ENCODE measurements at regions of chr18 and their contacts with region 1.

Region 1: DNA sequence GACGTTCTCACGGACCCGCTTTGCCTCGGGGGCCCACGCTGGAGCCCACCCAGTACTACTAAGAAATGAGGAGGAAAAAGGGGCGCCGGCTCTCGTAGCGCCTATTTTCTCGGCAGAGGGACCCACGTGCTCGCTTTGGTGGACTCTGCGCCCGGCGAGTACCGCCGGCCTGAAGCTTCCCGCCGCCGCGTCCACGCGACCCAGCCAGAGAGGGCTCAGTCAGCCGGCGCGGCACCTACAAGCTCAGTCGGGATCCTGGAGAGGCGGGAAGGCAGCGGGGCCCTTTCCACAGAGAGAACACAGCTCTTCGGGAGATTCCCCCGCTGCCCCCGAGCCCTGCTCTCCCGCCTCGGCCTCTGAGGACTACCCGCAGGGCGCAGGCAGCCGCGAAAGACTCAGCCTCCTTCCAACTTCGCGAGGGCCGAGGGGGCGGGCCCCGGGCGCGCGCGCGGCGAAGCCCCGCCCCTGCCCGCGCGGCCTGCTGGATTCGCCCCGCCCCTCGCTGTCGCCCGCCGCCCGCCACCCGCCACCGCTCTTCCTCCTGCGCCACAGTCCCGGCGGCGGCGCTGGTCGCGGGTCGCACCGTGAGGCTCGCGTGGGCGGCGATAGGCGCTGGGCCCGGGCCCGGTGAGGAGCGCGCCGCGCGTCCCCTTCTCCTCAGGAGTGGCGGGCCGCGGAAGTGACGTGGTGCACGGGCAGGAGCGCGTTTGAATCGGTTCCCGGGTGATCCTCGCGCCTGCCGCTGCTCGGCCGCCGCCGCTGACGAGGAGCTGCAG is at the start of gene SMCHD1:
- DNase-seq: peak; percentile 83 to 95 (median 90)
- ATAC-seq: peak; percentile 88
- H3K4me3 ChIP-seq: peak within 1 kb of the TSS; percentile 97
- H3K4me3 Mint-ChIP-seq: peak within 1 kb of the TSS; percentile 91 to 99 (median 95)
- H3K27ac ChIP-seq: peak within 1 kb of the TSS; percentile 100
- H3K27ac Mint-ChIP-seq: peak within 1 kb of the TSS; percentile 91 to 99 (median 96)
- H3K4me1 ChIP-seq: peaks cover 23 to 38% of the 10 kb centered on the region in 2 donors
- H3K4me1 Mint-ChIP-seq: peaks cover 23 to 66% (median 50%) of the 10 kb centered on the region in 7 donors
- H3K27me3 ChIP-seq: no peaks in the 10 kb centered on the region
- H3K27me3 Mint-ChIP-seq: no peaks in the 10 kb centered on the region
- total RNA-seq, gene SMCHD1: 181 to 305 (median 236) TPM

Region 2: GRCh38 chr18:2571200-2572143 is 83.9 kb before region 1 on chr18 and contains the starts of genes METTL4 and NDC80:
- CTCF ChIA-PET with region 1: interaction called, 4 read pairs
- POLR2A ChIA-PET with region 1: interaction called, 119 read pairs
- intact Hi-C with region 1: loop called (anchors 1 kb)
- DNase-seq: peak; percentile 70 to 90 (median 82)
- ATAC-seq: peak; percentile 87
- H3K4me3 ChIP-seq: peak within 1 kb of the TSS; percentile 88
- H3K4me3 Mint-ChIP-seq: peak within 1 kb of the TSS; percentile 96 to 100 (median 99)
- H3K27ac ChIP-seq: peak within 1 kb of the TSS; percentile 97
- H3K27ac Mint-ChIP-seq: peak within 1 kb of the TSS; percentile 98 to 100 (median 100)
- H3K4me1 ChIP-seq: peaks cover 10 to 13% of the 10 kb centered on the region in 2 donors
- H3K4me1 Mint-ChIP-seq: peaks cover 38 to 63% (median 59%) of the 10 kb centered on the region in 7 donors
- H3K27me3 ChIP-seq: no peaks in the 10 kb centered on the region
- H3K27me3 Mint-ChIP-seq: no peaks in the 10 kb centered on the region
- total RNA-seq, gene METTL4: 13.8 to 32.5 (median 22.8) TPM
- total RNA-seq, gene NDC80: 2.4 to 53.6 (median 2.7) TPM

Region 3: DNA sequence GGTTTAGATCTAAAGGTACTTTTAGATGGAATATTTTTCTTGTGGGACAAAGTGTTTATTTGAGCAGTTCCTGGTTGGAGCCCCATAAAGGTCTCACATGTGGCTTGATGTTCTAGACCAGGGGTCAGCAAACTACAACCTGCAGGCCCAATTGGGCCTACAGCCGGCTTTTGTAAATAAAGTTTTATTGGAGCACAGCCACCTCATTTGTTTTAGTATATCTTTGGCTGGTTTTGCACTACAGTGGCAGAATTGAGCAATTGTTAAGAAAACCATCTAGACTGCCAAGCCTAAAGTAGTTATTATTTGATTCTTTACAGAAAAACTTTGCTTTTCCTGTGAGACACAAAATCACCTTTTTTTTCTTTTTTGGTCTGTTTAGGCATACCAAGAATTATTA is 42.4 kb before region 1 on chr18:
- CTCF ChIA-PET with region 1: interaction called, 7 read pairs
- POLR2A ChIA-PET with region 1: interaction called, 19 read pairs
- intact Hi-C with region 1: no loop called
- DNase-seq: no peak
- ATAC-seq: no peak
- H3K4me3 ChIP-seq: no peak overlapping the region
- H3K4me3 Mint-ChIP-seq: no peak overlapping the region
- H3K27ac ChIP-seq: no peak overlapping the region
- H3K27ac Mint-ChIP-seq: peak overlapping the region in 2 of 9 donors; percentile 11 to 65
- H3K4me1 ChIP-seq: peaks cover 0 to 6% of the 10 kb centered on the region in 2 donors
- H3K4me1 Mint-ChIP-seq: peaks cover 5 to 42% (median 32%) of the 10 kb centered on the region in 7 donors
- H3K27me3 ChIP-seq: no peaks in the 10 kb centered on the region
- H3K27me3 Mint-ChIP-seq: no peaks in the 10 kb centered on the region

Region 4: DNA sequence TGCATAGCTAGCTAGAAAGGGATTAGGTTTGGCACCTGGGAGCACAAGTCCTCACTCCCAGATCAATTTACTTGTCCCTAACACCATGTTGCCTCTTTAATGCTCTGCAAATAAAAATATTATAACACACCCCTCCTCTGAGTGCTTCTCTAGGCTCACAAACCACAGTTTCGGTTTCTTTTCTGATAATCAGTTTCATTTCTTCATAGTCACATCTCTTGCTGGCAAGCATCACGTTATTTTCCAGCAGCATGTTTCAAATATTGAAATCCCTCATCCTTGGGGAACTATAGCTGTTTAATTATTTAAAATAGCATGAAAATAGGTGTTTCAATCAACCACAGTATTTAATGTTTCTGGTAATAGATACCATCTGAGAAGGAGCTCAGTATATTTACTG is 13.7 kb before region 1 on chr18:
- CTCF ChIA-PET with region 1: interaction called, 20 read pairs
- POLR2A ChIA-PET with region 1: interaction called, 424 read pairs
- intact Hi-C with region 1: loop called (anchors 1 kb)
- DNase-seq: peak in 7 of 9 donors; percentile 38 to 58 (median 52)
- ATAC-seq: peak; percentile 18
- H3K4me3 ChIP-seq: peak overlapping the region; percentile 36
- H3K4me3 Mint-ChIP-seq: peak overlapping the region in 9 of 10 donors; percentile 73 to 87 (median 84)
- H3K27ac ChIP-seq: peak overlapping the region; percentile 83
- H3K27ac Mint-ChIP-seq: peak overlapping the region in 3 of 9 donors; percentile 91 to 99 (median 95)
- H3K4me1 ChIP-seq: peaks cover 70 to 73% of the 10 kb centered on the region in 2 donors
- H3K4me1 Mint-ChIP-seq: peaks cover 0 to 54% (median 47%) of the 10 kb centered on the region in 7 donors
- H3K27me3 ChIP-seq: no peaks in the 10 kb centered on the region
- H3K27me3 Mint-ChIP-seq: no peaks in the 10 kb centered on the region

Region 5: GRCh38 chr18:2692508-2692907 is 37.1 kb after region 1 on chr18:
- CTCF ChIA-PET with region 1: interaction called, 3 read pairs
- POLR2A ChIA-PET with region 1: interaction called, 7 read pairs
- intact Hi-C with region 1: loop called in 1 of 2 experiments (anchors 5 kb)
- DNase-seq: no peak
- ATAC-seq: no peak
- H3K4me3 ChIP-seq: no peak overlapping the region
- H3K4me3 Mint-ChIP-seq: peak overlapping the region in 1 of 10 donors; percentile 16
- H3K27ac ChIP-seq: no peak overlapping the region
- H3K27ac Mint-ChIP-seq: peak overlapping the region in 6 of 9 donors; percentile 5 to 76 (median 23)
- H3K4me1 ChIP-seq: peaks cover 3 to 12% of the 10 kb centered on the region in 2 donors
- H3K4me1 Mint-ChIP-seq: peaks cover 16 to 58% (median 48%) of the 10 kb centered on the region in 7 donors
- H3K27me3 ChIP-seq: no peaks in the 10 kb centered on the region
- H3K27me3 Mint-ChIP-seq: no peaks in the 10 kb centered on the region

Region 6: DNA sequence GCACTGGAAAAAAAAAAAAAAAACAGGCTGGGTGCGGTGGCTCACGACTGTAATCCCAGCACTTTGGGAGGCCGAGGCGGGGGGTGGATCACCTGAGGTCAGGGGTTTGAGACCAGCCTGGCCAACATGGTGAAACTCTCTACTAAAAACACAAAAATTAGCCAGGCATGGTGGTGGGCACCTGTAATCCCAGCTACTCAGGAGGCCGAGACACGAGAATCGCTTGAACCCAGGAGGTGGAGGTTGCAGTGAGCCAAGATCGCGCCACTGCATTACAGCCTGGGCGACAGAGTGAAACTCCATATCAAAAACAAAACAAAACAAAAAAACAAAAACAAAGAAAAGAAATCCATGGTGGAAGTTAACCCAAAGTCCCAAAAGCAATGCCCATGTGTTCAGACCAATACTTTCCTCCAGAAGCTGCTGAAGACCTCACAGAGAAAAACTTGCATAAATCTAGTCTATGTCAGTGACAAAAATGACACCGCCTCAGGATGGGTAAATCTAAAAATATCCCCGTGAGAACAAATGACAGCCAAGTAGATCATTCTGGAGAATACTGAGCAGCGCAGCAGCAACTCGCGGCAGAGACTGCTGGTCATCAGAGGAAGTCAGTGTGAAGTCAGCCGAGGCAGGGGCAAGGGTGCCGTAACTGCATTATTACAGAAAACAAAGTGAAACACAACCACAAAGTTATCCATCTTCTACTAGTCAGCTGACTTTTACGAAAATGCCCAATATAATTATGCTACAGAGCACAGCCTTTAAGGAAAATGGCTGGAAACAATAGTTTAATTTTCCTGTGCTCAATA is 316.6 kb after region 1 on chr18:
- CTCF ChIA-PET with region 1: no interaction called
- POLR2A ChIA-PET with region 1: no interaction called
- intact Hi-C with region 1: no loop called
- DNase-seq: peak in 7 of 9 donors; percentile 40 to 80 (median 62)
- ATAC-seq: peak; percentile 84
- H3K4me3 ChIP-seq: peak overlapping the region; percentile 45
- H3K4me3 Mint-ChIP-seq: peak overlapping the region; percentile 75 to 93 (median 88)
- H3K27ac ChIP-seq: peak overlapping the region; percentile 76
- H3K27ac Mint-ChIP-seq: peak overlapping the region; percentile 90 to 99 (median 96)
- H3K4me1 ChIP-seq: peaks cover 75 to 82% of the 10 kb centered on the region in 2 donors
- H3K4me1 Mint-ChIP-seq: peaks cover 63 to 97% (median 93%) of the 10 kb centered on the region in 7 donors
- H3K27me3 ChIP-seq: no peaks in the 10 kb centered on the region
- H3K27me3 Mint-ChIP-seq: no peaks in the 10 kb centered on the region

Region 7: GRCh38 chr18:3261371-3262246 is 606.2 kb after region 1 on chr18 and contains the start of gene MYL12B:
- CTCF ChIA-PET with region 1: no interaction called
- POLR2A ChIA-PET with region 1: no interaction called
- intact Hi-C with region 1: loop called in 1 of 2 experiments (anchors 5 kb)
- DNase-seq: peak; percentile 72 to 88 (median 84)
- ATAC-seq: peak; percentile 87
- H3K4me3 ChIP-seq: peak within 1 kb of the TSS; percentile 81
- H3K4me3 Mint-ChIP-seq: peak within 1 kb of the TSS; percentile 87 to 100 (median 96)
- H3K27ac ChIP-seq: peak within 1 kb of the TSS; percentile 96
- H3K27ac Mint-ChIP-seq: peak within 1 kb of the TSS; percentile 95 to 100 (median 99)
- H3K4me1 ChIP-seq: peaks cover 54 to 66% of the 10 kb centered on the region in 2 donors
- H3K4me1 Mint-ChIP-seq: peaks cover 48 to 87% (median 83%) of the 10 kb centered on the region in 7 donors
- H3K27me3 ChIP-seq: no peaks in the 10 kb centered on the region
- H3K27me3 Mint-ChIP-seq: no peaks in the 10 kb centered on the region
- total RNA-seq, gene MYL12B: 140 to 300 (median 169) TPM

Measured in naive thymus-derived CD4-positive, alpha-beta T cell (primary cell).